GM12878 (cell line): ENCODE measurements at regions of chr7 and their contacts with region 1.

Region 1: DNA sequence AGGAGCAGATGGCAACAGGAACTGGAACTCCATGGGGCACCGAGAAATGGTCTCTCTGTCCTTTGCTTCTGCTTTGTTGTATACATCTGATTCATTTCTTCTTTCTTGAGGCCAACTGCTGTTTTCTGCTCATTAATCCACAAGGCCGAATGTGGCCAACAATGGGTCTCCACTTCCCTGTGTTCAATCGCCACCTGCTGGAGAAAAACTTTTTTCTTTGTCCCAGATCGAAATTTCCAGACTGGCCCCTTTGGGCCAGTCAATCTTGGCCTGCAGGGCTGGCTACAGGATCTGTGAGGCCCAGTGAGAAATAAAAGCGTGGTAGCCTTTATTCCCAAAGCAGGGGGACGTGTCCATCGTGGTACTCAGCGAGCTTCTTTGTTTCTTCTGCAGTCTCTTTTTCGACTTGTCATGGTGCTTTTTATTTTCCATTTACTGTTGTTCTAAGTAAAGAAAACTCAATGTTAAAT is 58.8 kb downstream of the PARP12 start:
- DNase-seq: peak; percentile 16
- ATAC-seq: peak; percentile 77
- H3K4me3 ChIP-seq: no peak overlapping the region
- H3K27ac ChIP-seq: no peak overlapping the region
- H3K4me1 ChIP-seq: no peaks in the 10 kb centered on the region
- H3K27me3 ChIP-seq: no peaks in the 10 kb centered on the region
- CTCF ChIP-seq: peak; percentile 58 to 69 (median 62)
- EP300 ChIP-seq: no peak
- POLR2A ChIP-seq: no peak
- RAD21 ChIP-seq: peak; percentile 86

Region 2: DNA sequence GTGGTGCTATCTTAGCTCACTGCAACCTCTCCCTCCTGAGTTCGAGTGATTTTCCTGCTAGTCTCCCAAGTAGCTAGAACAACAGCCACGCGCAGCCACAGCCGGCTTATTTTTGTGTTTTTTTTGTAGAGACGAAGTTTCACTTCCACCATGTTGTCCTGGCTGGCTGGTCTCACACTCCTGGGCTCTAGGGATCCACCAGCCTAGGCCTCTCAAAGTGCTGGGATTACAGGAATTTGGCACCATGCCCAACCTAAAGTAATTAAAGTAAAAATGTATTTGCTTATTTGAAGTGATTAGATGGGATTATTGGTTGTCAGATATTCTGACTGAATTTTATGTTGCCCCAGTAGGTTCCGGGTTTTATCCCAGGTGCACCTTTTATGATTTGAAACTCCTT is 621.5 kb before region 1 on chr7:
- CTCF ChIA-PET with region 1: no interaction called
- POLR2A ChIA-PET with region 1: no interaction called
- RAD21 ChIA-PET with region 1: no interaction called
- SMC1A ChIA-PET with region 1: no interaction called
- in situ Hi-C with region 1: no loop called
- intact Hi-C with region 1: no loop called
- DNase-seq: no peak
- ATAC-seq: no peak
- H3K4me3 ChIP-seq: no peak overlapping the region
- H3K27ac ChIP-seq: no peak overlapping the region
- H3K4me1 ChIP-seq: no peaks in the 10 kb centered on the region
- H3K27me3 ChIP-seq: no peaks in the 10 kb centered on the region
- CTCF ChIP-seq: no peak
- EP300 ChIP-seq: no peak
- POLR2A ChIP-seq: no peak
- RAD21 ChIP-seq: no peak

Region 3: GRCh38 chr7:139431010-139431409 is 572.9 kb before region 1 on chr7:
- CTCF ChIA-PET with region 1: interaction called, 17 read pairs
- POLR2A ChIA-PET with region 1: no interaction called
- RAD21 ChIA-PET with region 1: interaction called, 6 read pairs
- SMC1A ChIA-PET with region 1: interaction called, 3 read pairs
- in situ Hi-C with region 1: loop called (anchors 5 kb)
- intact Hi-C with region 1: loop called (anchors 2 kb)
- DNase-seq: no peak
- ATAC-seq: no peak
- H3K4me3 ChIP-seq: no peak overlapping the region
- H3K27ac ChIP-seq: no peak overlapping the region
- H3K4me1 ChIP-seq: no peaks in the 10 kb centered on the region
- H3K27me3 ChIP-seq: no peaks in the 10 kb centered on the region
- CTCF ChIP-seq: no peak
- EP300 ChIP-seq: no peak
- POLR2A ChIP-seq: no peak
- RAD21 ChIP-seq: no peak

Region 4: DNA sequence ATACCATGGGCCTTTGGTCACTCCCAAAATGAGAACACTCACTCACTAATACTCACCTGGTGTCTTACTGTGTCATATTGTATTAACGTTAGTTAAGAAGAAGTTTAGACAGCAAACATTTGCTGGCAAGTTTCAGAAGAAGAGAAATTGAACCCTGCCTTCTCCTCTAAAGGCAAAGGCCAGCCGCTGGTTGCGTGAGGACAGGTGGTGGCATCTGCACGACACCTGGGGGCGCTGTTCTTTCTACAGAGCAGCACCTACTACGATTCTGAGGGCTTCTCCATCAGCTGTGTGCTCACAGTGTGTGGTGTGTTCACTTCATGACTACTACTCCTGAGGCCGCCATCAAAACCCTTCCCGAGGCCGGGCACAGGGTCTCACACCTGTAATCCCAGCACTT is 498.4 kb before region 1 on chr7:
- CTCF ChIA-PET with region 1: interaction called, 5 read pairs
- POLR2A ChIA-PET with region 1: no interaction called
- RAD21 ChIA-PET with region 1: interaction called, 3 read pairs
- SMC1A ChIA-PET with region 1: interaction called, 7 read pairs
- in situ Hi-C with region 1: loop called (anchors 5 kb)
- intact Hi-C with region 1: loop called (anchors 1 kb)
- DNase-seq: no peak
- ATAC-seq: peak; percentile 43; the same call in 1 of the 3 replicates
- H3K4me3 ChIP-seq: no peak overlapping the region
- H3K27ac ChIP-seq: no peak overlapping the region
- H3K4me1 ChIP-seq: no peaks in the 10 kb centered on the region
- H3K27me3 ChIP-seq: no peaks in the 10 kb centered on the region
- CTCF ChIP-seq: peak; percentile 13 to 34 (median 18); a peak in 3 of 6 replicates
- EP300 ChIP-seq: no peak
- POLR2A ChIP-seq: no peak
- RAD21 ChIP-seq: 0 out of 2 replicates have a peak, but pooled peaks have one; percentile 8

Region 5: DNA sequence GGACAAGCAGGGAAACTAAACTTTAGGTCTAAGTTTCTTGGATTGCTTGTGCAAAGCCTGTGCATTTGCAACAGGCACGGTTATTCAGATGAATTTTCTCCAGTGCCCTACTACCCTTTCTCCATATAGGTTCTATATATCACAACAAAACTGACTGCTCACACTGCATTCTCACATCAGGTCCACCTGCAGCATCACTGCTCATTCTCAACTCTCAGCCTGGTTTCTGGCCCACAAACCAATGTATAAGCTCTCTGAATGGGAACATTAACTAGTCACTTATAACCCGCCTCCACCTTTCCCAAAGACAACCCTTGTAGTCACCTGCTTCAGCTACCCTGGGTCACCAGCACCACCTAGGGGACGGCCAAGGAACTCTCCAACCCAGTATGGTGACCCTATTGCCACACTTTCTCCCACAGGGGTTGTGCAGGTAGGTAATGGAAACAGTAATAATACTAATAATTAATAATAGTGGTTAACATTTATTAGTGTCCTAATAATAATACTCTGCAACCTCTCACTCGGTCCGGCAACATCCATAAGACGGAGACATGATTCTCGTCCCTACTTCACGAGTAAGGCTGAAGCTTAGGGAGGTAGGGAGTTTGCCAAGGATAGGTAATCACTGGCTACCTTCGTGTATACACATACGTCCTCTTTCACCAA is 383.1 kb before region 1 on chr7:
- CTCF ChIA-PET with region 1: interaction called, 39 read pairs
- POLR2A ChIA-PET with region 1: interaction called, 3 read pairs
- RAD21 ChIA-PET with region 1: interaction called, 13 read pairs
- SMC1A ChIA-PET with region 1: interaction called, 8 read pairs
- in situ Hi-C with region 1: no loop called
- intact Hi-C with region 1: loop called (anchors 5 kb)
- DNase-seq: no peak
- ATAC-seq: peak; percentile 96
- H3K4me3 ChIP-seq: no peak overlapping the region
- H3K27ac ChIP-seq: no peak overlapping the region
- H3K4me1 ChIP-seq: no peaks in the 10 kb centered on the region
- H3K27me3 ChIP-seq: no peaks in the 10 kb centered on the region
- CTCF ChIP-seq: peak; percentile 54 to 84 (median 83)
- EP300 ChIP-seq: no peak
- POLR2A ChIP-seq: no peak
- RAD21 ChIP-seq: peak; percentile 67

Region 6: DNA sequence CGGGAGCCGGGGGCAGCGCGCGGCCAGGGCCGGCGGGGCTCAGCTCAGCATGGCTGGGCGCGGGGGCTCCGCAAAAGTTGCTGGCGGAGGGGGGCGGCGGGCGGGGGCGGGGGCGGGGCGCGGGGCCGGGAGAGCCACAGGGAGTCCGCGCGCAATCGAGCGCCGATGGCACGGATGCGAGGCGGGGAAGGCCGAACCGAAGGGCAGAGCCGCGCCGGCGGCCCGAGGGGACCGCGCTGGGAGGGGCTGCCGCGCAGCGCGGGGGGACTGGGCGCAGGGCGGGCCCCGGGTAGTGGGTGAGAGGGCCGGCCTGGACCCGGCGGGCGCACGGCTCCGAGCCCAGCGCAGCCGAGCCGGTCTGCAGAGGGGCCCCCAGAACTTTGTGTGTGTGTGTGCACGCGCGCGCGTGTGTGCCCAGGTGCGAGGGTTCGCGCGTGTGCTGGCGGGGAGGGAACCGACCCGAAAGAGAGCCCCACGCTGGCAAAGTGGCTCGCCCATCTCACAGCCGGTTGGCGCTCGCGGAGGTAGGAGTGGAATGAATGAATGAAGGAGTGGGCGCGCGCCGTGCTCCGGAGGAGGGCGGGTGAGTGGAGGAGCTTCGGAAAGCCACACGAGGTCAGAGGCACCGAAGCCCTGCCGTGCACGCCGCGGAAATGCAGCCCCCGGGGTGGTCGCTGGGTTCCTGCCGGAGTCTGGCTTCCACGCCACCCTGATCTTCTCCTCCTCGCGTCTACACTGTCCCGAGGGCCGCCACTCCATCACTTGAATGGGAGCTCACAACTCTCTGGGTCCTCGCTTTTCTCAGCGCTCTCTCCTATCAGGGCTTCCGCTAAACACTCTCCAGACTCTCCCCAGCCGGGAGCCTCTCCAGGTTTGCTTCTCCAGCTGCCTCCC is 225.8 kb before region 1 on chr7 and contains the start of gene HIPK2:
- CTCF ChIA-PET with region 1: interaction called, 4 read pairs
- POLR2A ChIA-PET with region 1: no interaction called
- RAD21 ChIA-PET with region 1: interaction called, 3 read pairs
- SMC1A ChIA-PET with region 1: interaction called, 6 read pairs
- in situ Hi-C with region 1: loop called (anchors 5 kb)
- intact Hi-C with region 1: loop called (anchors 1 kb)
- DNase-seq: no peak
- ATAC-seq: peak; percentile 70
- H3K4me3 ChIP-seq: peak within 1 kb of the TSS; percentile 99
- H3K27ac ChIP-seq: peak within 1 kb of the TSS; percentile 64
- H3K4me1 ChIP-seq: peaks cover 14% of the 10 kb centered on the region
- H3K27me3 ChIP-seq: peaks cover 0 to 10% of the 10 kb centered on the region in 2 experiments; a peak in 2 of 4 replicates
- CTCF ChIP-seq: no peak
- EP300 ChIP-seq: no peak
- POLR2A ChIP-seq: peak; percentile 64; the same call in 1 of the 2 replicates
- RAD21 ChIP-seq: no peak
- polyA plus RNA-seq, gene HIPK2: 1.7 to 3.3 TPM

Region 7: GRCh38 chr7:140017543-140017942 is 13.6 kb after region 1 on chr7:
- CTCF ChIA-PET with region 1: interaction called, 11 read pairs
- POLR2A ChIA-PET with region 1: no interaction called
- RAD21 ChIA-PET with region 1: no interaction called
- SMC1A ChIA-PET with region 1: no interaction called
- in situ Hi-C with region 1: no loop called
- intact Hi-C with region 1: no loop called
- DNase-seq: no peak
- ATAC-seq: no peak
- H3K4me3 ChIP-seq: no peak overlapping the region
- H3K27ac ChIP-seq: no peak overlapping the region
- H3K4me1 ChIP-seq: no peaks in the 10 kb centered on the region
- H3K27me3 ChIP-seq: no peaks in the 10 kb centered on the region; a peak in 1 of 4 replicates
- CTCF ChIP-seq: no peak
- EP300 ChIP-seq: no peak
- POLR2A ChIP-seq: no peak
- RAD21 ChIP-seq: no peak

Region 8: GRCh38 chr7:140028311-140028710 is 24.4 kb after region 1 on chr7:
- CTCF ChIA-PET with region 1: no interaction called
- POLR2A ChIA-PET with region 1: no interaction called
- RAD21 ChIA-PET with region 1: no interaction called
- SMC1A ChIA-PET with region 1: no interaction called
- in situ Hi-C with region 1: no loop called
- intact Hi-C with region 1: no loop called
- DNase-seq: no peak
- ATAC-seq: no peak
- H3K4me3 ChIP-seq: no peak overlapping the region
- H3K27ac ChIP-seq: no peak overlapping the region
- H3K4me1 ChIP-seq: no peaks in the 10 kb centered on the region
- H3K27me3 ChIP-seq: no peaks in the 10 kb centered on the region
- CTCF ChIP-seq: no peak
- EP300 ChIP-seq: no peak
- POLR2A ChIP-seq: no peak
- RAD21 ChIP-seq: no peak

Region 9: DNA sequence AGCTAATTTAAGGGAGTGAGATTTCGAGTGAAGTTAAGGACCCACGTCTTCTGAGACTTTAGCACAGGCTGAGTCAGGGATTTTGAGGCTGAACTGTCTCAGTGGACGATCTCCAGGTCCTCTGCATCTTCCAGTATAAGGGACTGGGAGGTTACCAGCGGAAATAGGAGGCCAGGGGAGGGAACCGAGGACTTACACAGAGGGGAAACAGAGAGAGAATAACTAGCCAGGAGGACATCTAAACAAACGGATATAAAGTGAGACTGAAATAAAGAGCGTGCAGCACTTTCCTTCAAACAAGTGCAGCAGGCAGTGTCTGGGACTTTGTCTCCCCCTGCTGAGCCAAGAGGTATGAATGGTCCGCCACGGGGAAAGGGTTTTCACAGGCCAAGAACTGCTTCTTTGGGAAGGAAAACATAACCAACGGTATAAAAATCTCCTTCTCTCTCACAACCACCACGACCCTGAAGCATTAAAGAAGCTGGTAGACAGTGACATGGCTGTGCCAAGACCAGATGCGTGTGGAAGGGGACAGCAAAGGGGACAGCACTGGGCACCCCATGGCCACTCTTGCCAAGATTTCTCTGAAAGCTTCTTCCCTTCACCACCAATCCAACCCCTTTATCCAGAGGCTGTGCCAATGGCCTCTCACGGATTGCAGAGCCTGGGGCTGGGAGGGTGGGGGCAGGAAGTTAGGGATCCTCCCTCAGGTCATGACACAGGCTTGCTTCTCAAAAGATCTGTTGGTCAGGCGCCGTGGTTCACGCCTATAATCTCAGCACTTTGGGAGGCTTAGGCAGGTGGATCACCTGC is 322.4 kb after region 1 on chr7:
- CTCF ChIA-PET with region 1: interaction called, 6 read pairs
- POLR2A ChIA-PET with region 1: no interaction called
- RAD21 ChIA-PET with region 1: no interaction called
- SMC1A ChIA-PET with region 1: no interaction called
- in situ Hi-C with region 1: no loop called
- intact Hi-C with region 1: loop called (anchors 5 kb)
- DNase-seq: no peak
- ATAC-seq: peak; percentile 80
- H3K4me3 ChIP-seq: no peak overlapping the region
- H3K27ac ChIP-seq: no peak overlapping the region
- H3K4me1 ChIP-seq: no peaks in the 10 kb centered on the region
- H3K27me3 ChIP-seq: peaks cover 0 to 1% of the 10 kb centered on the region in 2 experiments; a peak in 1 of 4 replicates
- CTCF ChIP-seq: peak; percentile 62 to 68 (median 67); a peak in 5 of 6 replicates
- EP300 ChIP-seq: no peak
- POLR2A ChIP-seq: no peak
- RAD21 ChIP-seq: peak; percentile 84